PC-3 (cell line): ENCODE measurements at regions of chr1 and their contacts with region 1.

Region 1: GRCh38 chr1:93738075-93738622 is 56.5 kb upstream of the BCAR3 start:
- DNase-seq: peak; percentile 98
- ATAC-seq: peak; percentile 92
- H3K4me3 ChIP-seq: no peak overlapping the region
- H3K27ac ChIP-seq: peak overlapping the region; percentile 97
- H3K4me1 ChIP-seq: peaks cover 49% of the 10 kb centered on the region
- H3K27me3 ChIP-seq: no peaks in the 10 kb centered on the region
- CTCF ChIP-seq: no peak

Region 2: GRCh38 chr1:93652323-93652949 is 85.7 kb before region 1 on chr1:
- CTCF ChIA-PET with region 1: no interaction called
- POLR2A ChIA-PET with region 1: no interaction called
- intact Hi-C with region 1: no loop called
- DNase-seq: no peak
- ATAC-seq: peak; percentile 29
- H3K4me3 ChIP-seq: no peak overlapping the region
- H3K27ac ChIP-seq: no peak overlapping the region
- H3K4me1 ChIP-seq: no peaks in the 10 kb centered on the region
- H3K27me3 ChIP-seq: no peaks in the 10 kb centered on the region
- CTCF ChIP-seq: no peak

Region 3: GRCh38 chr1:93680757-93681550 is 57.2 kb before region 1 on chr1:
- CTCF ChIA-PET with region 1: no interaction called
- POLR2A ChIA-PET with region 1: interaction called, 29 read pairs
- intact Hi-C with region 1: loop called (anchors 2 kb)
- DNase-seq: peak; percentile 82
- ATAC-seq: peak; percentile 34
- H3K4me3 ChIP-seq: peak overlapping the region; percentile 95
- H3K27ac ChIP-seq: peak overlapping the region; percentile 99
- H3K4me1 ChIP-seq: peaks cover 78% of the 10 kb centered on the region
- H3K27me3 ChIP-seq: no peaks in the 10 kb centered on the region
- CTCF ChIP-seq: peak; percentile 61

Region 4: GRCh38 chr1:93692983-93693591 is 45.1 kb before region 1 on chr1:
- CTCF ChIA-PET with region 1: no interaction called
- POLR2A ChIA-PET with region 1: interaction called, 14 read pairs
- intact Hi-C with region 1: no loop called
- DNase-seq: peak; percentile 97
- ATAC-seq: peak; percentile 70
- H3K4me3 ChIP-seq: peak overlapping the region; percentile 43; the same call in 1 of the 2 replicates
- H3K27ac ChIP-seq: peak overlapping the region; percentile 99
- H3K4me1 ChIP-seq: peaks cover 58% of the 10 kb centered on the region
- H3K27me3 ChIP-seq: no peaks in the 10 kb centered on the region
- CTCF ChIP-seq: no peak

Region 5: DNA sequence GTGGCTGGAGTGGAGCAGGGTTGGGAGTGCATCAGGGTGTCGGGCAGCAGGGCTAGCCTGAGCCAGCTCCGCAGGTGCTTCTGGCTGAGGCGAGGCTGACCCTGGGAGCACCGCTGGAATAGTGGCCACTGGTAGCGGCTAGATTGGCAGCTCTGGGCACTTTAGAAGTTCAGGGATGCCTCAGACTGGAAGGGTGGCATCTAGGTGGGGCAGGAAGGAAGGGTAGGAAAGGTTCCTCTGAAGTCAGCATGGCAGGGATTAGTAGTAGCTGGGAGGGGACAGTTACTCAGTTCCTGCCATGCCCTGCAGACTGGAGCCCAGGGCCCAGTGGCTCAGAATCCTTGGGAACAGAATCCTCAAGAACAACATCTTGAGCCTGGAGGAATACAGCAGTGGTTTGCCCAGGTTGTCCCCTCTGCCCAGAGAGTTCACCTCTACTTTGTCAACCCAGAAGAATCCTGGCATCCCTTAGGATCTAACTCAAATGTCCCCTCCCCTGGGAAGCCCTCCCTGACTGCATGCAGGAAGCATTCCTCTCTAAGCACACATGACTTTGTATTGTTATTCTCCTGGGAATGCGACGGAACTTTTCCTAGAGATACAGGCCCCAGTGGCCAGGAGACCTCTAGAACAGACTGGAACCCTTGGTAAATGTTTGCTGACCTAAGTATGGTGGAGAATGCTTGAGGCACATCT is 17.1 kb before region 1 on chr1:
- CTCF ChIA-PET with region 1: no interaction called
- POLR2A ChIA-PET with region 1: interaction called, 16 read pairs
- intact Hi-C with region 1: loop called (anchors 2 kb)
- DNase-seq: peak; percentile 83
- ATAC-seq: peak; percentile 87
- H3K4me3 ChIP-seq: no peak overlapping the region
- H3K27ac ChIP-seq: peak overlapping the region; percentile 94
- H3K4me1 ChIP-seq: peaks cover 41% of the 10 kb centered on the region
- H3K27me3 ChIP-seq: no peaks in the 10 kb centered on the region
- CTCF ChIP-seq: no peak

Region 6: GRCh38 chr1:93749894-93750301 is 11.7 kb after region 1 on chr1:
- CTCF ChIA-PET with region 1: interaction called, 6 read pairs
- POLR2A ChIA-PET with region 1: interaction called, 14 read pairs
- intact Hi-C with region 1: no loop called
- DNase-seq: peak; percentile 66
- ATAC-seq: peak; percentile 69
- H3K4me3 ChIP-seq: no peak overlapping the region
- H3K27ac ChIP-seq: peak overlapping the region; percentile 63
- H3K4me1 ChIP-seq: peaks cover 37% of the 10 kb centered on the region
- H3K27me3 ChIP-seq: no peaks in the 10 kb centered on the region
- CTCF ChIP-seq: peak; percentile 59

Region 7: GRCh38 chr1:93779540-93780192 is 41.5 kb after region 1 on chr1:
- CTCF ChIA-PET with region 1: no interaction called
- POLR2A ChIA-PET with region 1: interaction called, 3 read pairs
- intact Hi-C with region 1: loop called (anchors 1 kb)
- DNase-seq: peak; percentile 99
- ATAC-seq: peak; percentile 85
- H3K4me3 ChIP-seq: no peak overlapping the region; the same call in 1 of the 2 replicates
- H3K27ac ChIP-seq: peak overlapping the region; percentile 98
- H3K4me1 ChIP-seq: peaks cover 48% of the 10 kb centered on the region
- H3K27me3 ChIP-seq: no peaks in the 10 kb centered on the region
- CTCF ChIP-seq: no peak

Region 8: DNA sequence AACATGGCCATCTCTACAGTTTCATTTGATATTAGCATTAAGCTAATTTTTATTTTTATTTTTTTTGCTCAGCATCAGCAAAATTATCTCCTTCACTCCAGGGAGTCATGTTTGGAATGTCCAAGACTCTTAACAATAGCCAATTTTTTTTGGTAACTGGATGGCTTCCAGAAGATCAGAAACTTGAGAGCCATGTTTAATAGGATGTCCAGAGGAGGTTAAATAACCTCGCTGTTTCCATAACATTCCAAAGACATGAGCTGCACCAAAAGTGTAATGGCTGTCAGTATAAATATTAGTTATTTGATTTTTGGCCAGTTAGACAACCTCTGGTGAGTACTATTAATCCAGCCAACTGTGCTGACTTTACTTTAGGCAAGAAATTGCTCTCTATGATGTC is 60.2 kb after region 1 on chr1:
- CTCF ChIA-PET with region 1: no interaction called
- POLR2A ChIA-PET with region 1: interaction called, 14 read pairs
- intact Hi-C with region 1: no loop called
- DNase-seq: peak; percentile 98
- ATAC-seq: peak; percentile 96
- H3K4me3 ChIP-seq: no peak overlapping the region; the same call in 1 of the 2 replicates
- H3K27ac ChIP-seq: peak overlapping the region; percentile 89
- H3K4me1 ChIP-seq: peaks cover 41% of the 10 kb centered on the region
- H3K27me3 ChIP-seq: no peaks in the 10 kb centered on the region
- CTCF ChIP-seq: no peak